GM12878 (cell line): ENCODE measurements at regions of chr5 and their contacts with region 1.

Region 1: GRCh38 chr5:140005145-140005591 is 37.9 kb downstream of the NRG2 start:
- DNase-seq: peak; percentile 96
- ATAC-seq: peak; percentile 98
- H3K4me3 ChIP-seq: no peak overlapping the region
- H3K27ac ChIP-seq: peak overlapping the region; percentile 49
- H3K4me1 ChIP-seq: peaks cover 26% of the 10 kb centered on the region
- H3K27me3 ChIP-seq: no peaks in the 10 kb centered on the region
- CTCF ChIP-seq: no peak
- EP300 ChIP-seq: peak; percentile 35 to 64; a peak in 2 of 4 replicates
- POLR2A ChIP-seq: peak; percentile 66
- RAD21 ChIP-seq: no peak

Region 2: GRCh38 chr5:139637438-139638089 is 367.6 kb before region 1 on chr5:
- CTCF ChIA-PET with region 1: no interaction called
- POLR2A ChIA-PET with region 1: no interaction called
- RAD21 ChIA-PET with region 1: no interaction called
- SMC1A ChIA-PET with region 1: no interaction called
- in situ Hi-C with region 1: no loop called
- intact Hi-C with region 1: no loop called
- DNase-seq: no peak
- ATAC-seq: peak; percentile 61
- H3K4me3 ChIP-seq: peak overlapping the region; percentile 67
- H3K27ac ChIP-seq: peak overlapping the region; percentile 97
- H3K4me1 ChIP-seq: peaks cover 61% of the 10 kb centered on the region
- H3K27me3 ChIP-seq: no peaks in the 10 kb centered on the region
- CTCF ChIP-seq: peak; percentile 11 to 32 (median 13); a peak in 3 of 6 replicates
- EP300 ChIP-seq: no peak
- POLR2A ChIP-seq: peak; percentile 29
- RAD21 ChIP-seq: no peak; the same call in 1 of the 2 replicates

Region 3: DNA sequence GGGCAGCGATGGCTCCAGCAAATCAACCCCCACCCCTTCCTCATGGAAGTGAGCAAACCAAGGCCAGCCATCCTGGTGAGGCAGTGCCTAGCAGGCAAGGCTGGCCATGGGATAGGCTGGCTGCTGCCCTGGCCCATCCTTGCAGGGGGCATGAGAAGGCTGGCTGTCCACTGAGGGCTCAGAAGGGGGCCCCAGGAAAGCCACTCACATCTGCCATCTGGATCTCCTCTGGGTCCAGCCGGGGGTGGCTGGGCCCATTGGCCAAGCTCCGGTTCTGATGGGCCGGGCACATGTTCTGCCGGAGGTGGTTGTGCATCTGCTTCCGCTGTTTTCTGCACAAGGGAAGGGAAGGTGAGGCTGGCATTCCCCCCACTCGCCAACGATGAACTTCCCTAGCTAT is 152.5 kb before region 1 on chr5:
- CTCF ChIA-PET with region 1: no interaction called
- POLR2A ChIA-PET with region 1: no interaction called
- RAD21 ChIA-PET with region 1: no interaction called
- SMC1A ChIA-PET with region 1: no interaction called
- in situ Hi-C with region 1: no loop called
- intact Hi-C with region 1: no loop called
- DNase-seq: no peak
- ATAC-seq: no peak
- H3K4me3 ChIP-seq: no peak overlapping the region
- H3K27ac ChIP-seq: no peak overlapping the region
- H3K4me1 ChIP-seq: no peaks in the 10 kb centered on the region
- H3K27me3 ChIP-seq: no peaks in the 10 kb centered on the region
- CTCF ChIP-seq: no peak
- EP300 ChIP-seq: no peak
- POLR2A ChIP-seq: no peak
- RAD21 ChIP-seq: no peak

Region 4: DNA sequence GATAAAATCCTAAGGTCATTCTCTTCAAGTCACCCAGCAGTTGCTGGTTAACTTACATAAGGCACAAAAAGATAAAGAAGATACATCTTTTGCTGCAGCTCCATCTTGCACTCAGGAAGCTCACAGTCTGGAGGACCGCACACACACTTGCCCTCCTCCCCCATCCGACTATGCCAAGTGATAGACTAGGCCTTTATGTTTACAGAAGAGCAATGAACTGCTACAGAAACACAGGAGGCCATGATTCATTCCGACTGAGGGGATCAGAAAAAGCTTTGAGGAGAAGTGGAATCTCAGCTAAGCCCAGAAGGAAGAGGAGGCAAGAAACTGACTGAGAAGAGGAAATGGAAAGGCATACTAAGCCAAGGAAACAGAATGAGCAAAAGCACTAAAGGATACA is 20.6 kb after region 1 on chr5:
- CTCF ChIA-PET with region 1: interaction called, 6 read pairs
- POLR2A ChIA-PET with region 1: interaction called, 5 read pairs
- RAD21 ChIA-PET with region 1: interaction called, 10 read pairs
- SMC1A ChIA-PET with region 1: interaction called, 13 read pairs
- in situ Hi-C with region 1: no loop called
- intact Hi-C with region 1: no loop called
- DNase-seq: no peak
- ATAC-seq: no peak
- H3K4me3 ChIP-seq: no peak overlapping the region
- H3K27ac ChIP-seq: no peak overlapping the region
- H3K4me1 ChIP-seq: no peaks in the 10 kb centered on the region
- H3K27me3 ChIP-seq: no peaks in the 10 kb centered on the region
- CTCF ChIP-seq: no peak
- EP300 ChIP-seq: no peak
- POLR2A ChIP-seq: no peak
- RAD21 ChIP-seq: no peak